Activated CD4-positive, alpha-beta T cell treated with anti-CD3 and anti-CD28 coated beads for 36 hours (primary cell): ENCODE measurements at regions of chr15 and their contacts with region 1.

Region 1: DNA sequence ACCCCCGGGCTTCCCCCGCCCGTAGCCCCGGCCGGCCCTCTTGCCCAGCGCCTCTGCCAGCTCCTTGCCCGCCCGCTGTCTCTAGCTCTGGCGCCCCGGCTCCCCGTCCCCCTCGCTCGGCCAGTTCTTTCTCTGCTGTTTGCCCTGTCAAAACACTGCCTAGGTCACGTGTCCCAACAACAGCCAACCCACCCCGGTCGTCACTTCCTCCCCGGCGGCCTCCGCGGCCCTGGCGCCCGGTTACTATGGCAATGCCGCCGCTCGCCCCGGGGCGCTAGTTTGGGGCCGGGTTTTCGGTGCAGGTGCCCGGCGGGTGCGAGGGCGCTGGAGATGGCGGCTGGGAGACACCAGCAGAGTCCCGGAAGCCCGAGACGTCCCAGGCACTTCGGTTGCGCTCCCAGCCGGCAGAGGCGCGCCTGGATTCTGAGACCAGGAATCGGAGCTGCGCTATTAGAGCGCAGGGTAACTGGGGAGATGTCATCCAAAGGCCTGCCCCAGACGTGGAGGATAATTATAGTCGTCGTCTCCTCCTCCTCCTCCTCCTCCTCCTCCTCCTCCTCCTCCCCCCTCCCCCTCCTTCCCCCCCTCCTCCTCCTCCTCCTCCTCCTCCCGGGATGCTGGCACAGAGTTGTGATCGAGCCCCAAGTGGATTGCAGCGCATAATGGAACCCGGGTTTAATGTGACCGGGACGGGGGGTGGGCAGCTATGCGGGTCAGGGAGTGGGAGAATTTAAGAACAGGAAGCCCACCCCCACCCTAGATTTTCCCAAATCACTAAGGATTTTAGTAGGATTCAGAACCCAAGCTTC is at the start of gene ATOSA:
- DNase-seq: peak; percentile 95
- ATAC-seq: peak; percentile 85
- H3K4me3 Mint-ChIP-seq: peak within 1 kb of the TSS; percentile 99
- H3K27ac Mint-ChIP-seq: peak within 1 kb of the TSS; percentile 97
- H3K4me1 Mint-ChIP-seq: peaks cover 45% of the 10 kb centered on the region
- H3K27me3 Mint-ChIP-seq: no peaks in the 10 kb centered on the region
- total RNA-seq, gene ATOSA: 13.4 to 13.5 TPM

Region 2: GRCh38 chr15:52261498-52262242 is 417.8 kb before region 1 on chr15:
- CTCF ChIA-PET with region 1: no interaction called
- POLR2A ChIA-PET with region 1: no interaction called
- intact Hi-C with region 1: loop called (anchors 2 kb)
- DNase-seq: peak; percentile 83
- ATAC-seq: peak; percentile 100
- H3K4me3 Mint-ChIP-seq: no peak overlapping the region
- H3K27ac Mint-ChIP-seq: peak overlapping the region; percentile 84
- H3K4me1 Mint-ChIP-seq: peaks cover 31% of the 10 kb centered on the region
- H3K27me3 Mint-ChIP-seq: no peaks in the 10 kb centered on the region

Region 3: GRCh38 chr15:52370010-52370409 is 309.4 kb before region 1 on chr15:
- CTCF ChIA-PET with region 1: no interaction called
- POLR2A ChIA-PET with region 1: no interaction called
- intact Hi-C with region 1: no loop called
- DNase-seq: no peak
- ATAC-seq: no peak
- H3K4me3 Mint-ChIP-seq: no peak overlapping the region
- H3K27ac Mint-ChIP-seq: no peak overlapping the region
- H3K4me1 Mint-ChIP-seq: no peaks in the 10 kb centered on the region
- H3K27me3 Mint-ChIP-seq: no peaks in the 10 kb centered on the region

Region 4: GRCh38 chr15:52568601-52569256 is 110.7 kb before region 1 on chr15 and contains the start of gene ARPP19:
- CTCF ChIA-PET with region 1: no interaction called
- POLR2A ChIA-PET with region 1: no interaction called
- intact Hi-C with region 1: loop called (anchors 1 to 2 kb)
- DNase-seq: peak; percentile 90
- ATAC-seq: peak; percentile 83
- H3K4me3 Mint-ChIP-seq: peak within 1 kb of the TSS; percentile 96
- H3K27ac Mint-ChIP-seq: peak within 1 kb of the TSS; percentile 97
- H3K4me1 Mint-ChIP-seq: peaks cover 27% of the 10 kb centered on the region
- H3K27me3 Mint-ChIP-seq: no peaks in the 10 kb centered on the region
- total RNA-seq, gene ARPP19: 141 to 185 TPM

Region 5: DNA sequence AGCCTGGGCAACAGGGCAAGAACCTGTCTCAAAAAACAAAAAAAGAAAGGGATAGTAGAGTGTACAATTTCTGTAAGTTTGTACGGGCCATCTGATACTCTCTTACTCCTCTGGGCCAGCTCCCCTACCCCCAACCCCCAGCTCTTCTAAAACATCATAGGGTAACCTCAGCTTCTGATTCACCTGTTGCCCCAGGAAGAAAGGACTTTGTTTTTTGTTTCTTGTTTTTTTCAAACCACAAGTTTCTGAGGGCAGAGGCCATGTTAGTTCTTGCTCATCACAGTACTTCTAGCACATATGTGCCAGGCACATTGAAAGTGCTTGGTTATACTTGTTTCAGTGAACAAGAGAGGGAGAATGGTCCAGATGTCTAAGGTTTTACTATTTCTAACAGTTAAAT is 20.5 kb before region 1 on chr15:
- CTCF ChIA-PET with region 1: interaction called, 6 read pairs
- POLR2A ChIA-PET with region 1: interaction called, 3 read pairs
- intact Hi-C with region 1: loop called (anchors 1 to 2 kb)
- DNase-seq: peak; percentile 61
- ATAC-seq: peak; percentile 94
- H3K4me3 Mint-ChIP-seq: peak overlapping the region; percentile 28
- H3K27ac Mint-ChIP-seq: peak overlapping the region; percentile 34
- H3K4me1 Mint-ChIP-seq: peaks cover 26% of the 10 kb centered on the region
- H3K27me3 Mint-ChIP-seq: no peaks in the 10 kb centered on the region

Region 6: DNA sequence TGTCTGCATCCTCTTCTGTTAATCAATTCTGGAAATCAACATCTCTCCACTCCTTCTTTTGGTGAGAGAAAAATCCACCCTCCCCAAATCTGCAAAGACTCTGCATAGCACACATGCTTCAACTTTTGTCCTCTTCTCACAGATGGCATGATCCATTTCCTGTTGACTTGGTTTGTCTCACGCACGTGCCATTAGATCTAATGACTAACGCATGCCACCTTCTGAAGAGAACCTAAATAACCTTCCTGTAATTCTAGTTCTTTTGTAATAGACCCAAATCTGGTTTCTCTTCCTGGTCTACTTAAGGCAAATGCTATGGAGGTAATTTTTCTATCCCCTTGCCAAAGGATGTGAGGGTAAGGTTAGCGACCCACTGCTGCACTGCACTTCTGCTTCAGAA is 50.7 kb after region 1 on chr15:
- CTCF ChIA-PET with region 1: interaction called, 3 read pairs
- POLR2A ChIA-PET with region 1: no interaction called
- intact Hi-C with region 1: loop called (anchors 2 to 5 kb)
- DNase-seq: peak; percentile 47
- ATAC-seq: peak; percentile 78
- H3K4me3 Mint-ChIP-seq: no peak overlapping the region
- H3K27ac Mint-ChIP-seq: peak overlapping the region; percentile 81
- H3K4me1 Mint-ChIP-seq: peaks cover 27% of the 10 kb centered on the region
- H3K27me3 Mint-ChIP-seq: no peaks in the 10 kb centered on the region